ENCODE measurements at regions of chr17 and their contacts with region 1.

Region 1: GRCh38 chr17:32529604-32530003 is 42.8 kb downstream of the CDK5R1 start:
- DNase-seq: no peak
- H3K4me3 ChIP-seq: no peak overlapping the region
- CTCF ChIP-seq: no peak

Region 2: GRCh38 chr17:32569171-32570080 is 39.8 kb after region 1 on chr17:
- in situ Hi-C with region 1: no loop called
- DNase-seq: no peak
- H3K4me3 ChIP-seq: no peak overlapping the region
- CTCF ChIP-seq: no peak

Region 3: DNA sequence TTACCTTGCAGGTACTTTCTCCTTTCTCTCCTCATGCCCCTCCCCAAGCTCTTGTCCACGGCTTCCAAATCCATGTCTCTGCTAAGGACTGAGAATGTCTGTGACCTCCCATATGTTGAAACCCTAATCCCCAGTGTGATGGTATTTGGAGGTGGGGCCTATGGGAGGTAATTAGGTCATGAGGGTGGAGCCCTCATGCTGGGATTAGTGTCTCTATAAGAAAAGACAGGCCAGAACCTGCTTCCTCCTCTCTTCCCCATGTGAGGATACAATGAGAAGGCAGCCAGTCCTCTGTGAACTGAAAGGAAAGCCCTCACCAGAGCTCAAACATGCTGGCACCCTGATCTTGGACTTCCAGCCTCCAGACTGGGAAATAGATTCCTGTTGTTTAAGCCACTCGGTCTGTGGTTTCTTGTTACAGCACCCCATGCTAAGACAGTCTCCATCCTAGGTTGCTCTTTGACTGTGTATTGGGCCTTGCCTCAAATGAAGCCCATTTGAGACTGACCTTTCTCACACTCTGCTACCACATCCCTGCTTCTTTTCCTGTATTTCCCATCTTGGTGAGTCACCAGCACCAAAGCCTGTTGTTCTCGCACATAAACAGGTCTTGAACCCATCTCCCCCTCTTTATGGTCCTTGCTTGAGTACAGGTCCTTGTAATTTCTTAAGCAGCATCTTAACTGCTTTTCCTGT is 92.2 kb after region 1 on chr17:
- in situ Hi-C with region 1: loop called (anchors 5 kb)
- DNase-seq: no peak
- H3K4me3 ChIP-seq: no peak overlapping the region
- CTCF ChIP-seq: no peak